T-cell (primary cell): ENCODE measurements at regions of chr14 and their contacts with region 1.

Region 1: DNA sequence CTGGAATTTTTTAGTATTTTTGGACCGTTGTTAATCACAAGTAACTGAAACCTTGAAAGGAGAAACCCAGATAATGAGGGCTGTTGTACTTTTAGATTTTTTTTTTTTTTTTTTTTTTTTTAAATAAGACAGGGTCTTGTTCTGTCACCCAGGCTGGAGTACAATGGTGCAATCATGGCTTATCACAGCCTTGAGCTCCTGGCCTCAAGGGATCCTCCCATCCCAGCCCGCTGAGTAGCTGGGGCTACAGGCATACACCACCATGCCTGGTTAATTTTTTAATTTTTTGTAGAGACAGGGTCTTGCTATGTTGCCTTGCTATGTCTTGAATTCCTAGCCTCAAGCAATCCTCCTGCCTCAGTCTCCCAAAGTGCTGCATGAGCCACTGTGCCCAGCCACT is 211.6 kb downstream of the SYNE2 start:
- DNase-seq: no peak
- ATAC-seq: no peak
- H3K4me3 ChIP-seq: no peak overlapping the region
- H3K4me3 Mint-ChIP-seq: no peak overlapping the region
- H3K27ac ChIP-seq: no peak overlapping the region
- H3K27ac Mint-ChIP-seq: no peak overlapping the region
- H3K4me1 ChIP-seq: no peaks in the 10 kb centered on the region
- H3K4me1 Mint-ChIP-seq: peaks cover 0 to 3% (median 2%) of the 10 kb centered on the region in 3 donors
- H3K27me3 ChIP-seq: no peaks in the 10 kb centered on the region
- H3K27me3 Mint-ChIP-seq: no peaks in the 10 kb centered on the region

Region 2: DNA sequence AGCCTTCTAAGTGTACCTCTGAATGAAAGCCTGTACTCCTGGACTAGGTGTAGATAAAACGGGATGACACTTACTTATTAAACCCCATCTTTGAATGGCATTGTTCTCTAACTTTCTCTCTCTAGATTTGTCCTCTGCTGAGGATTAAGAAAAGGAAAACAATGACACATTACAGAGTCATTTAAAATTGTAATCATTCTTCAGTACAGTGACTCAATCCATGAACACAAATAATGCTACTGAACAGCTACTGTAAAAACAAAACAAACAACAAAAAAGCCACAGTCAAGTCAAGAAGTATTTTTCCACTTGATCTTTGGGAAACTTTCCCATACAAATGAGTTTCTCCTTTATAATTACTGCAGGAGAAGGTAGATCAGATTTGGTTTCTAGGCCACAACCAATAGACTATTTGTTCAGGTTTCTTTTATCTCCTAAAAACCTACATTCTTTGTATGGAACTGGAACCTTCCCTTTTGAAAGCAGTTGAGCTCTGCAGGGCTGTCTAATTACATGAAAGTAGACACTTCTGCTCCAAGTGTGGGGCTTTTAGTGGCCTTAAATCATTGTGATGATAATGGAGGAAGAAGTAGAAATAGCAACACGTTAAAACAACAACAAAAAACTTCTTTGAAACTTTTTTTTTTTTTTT is 10.6 kb after region 1 on chr14:
- CTCF ChIA-PET with region 1: interaction called in 1 of 2 experiments, 11 read pairs
- POLR2A ChIA-PET with region 1: no interaction called
- DNase-seq: no peak
- ATAC-seq: no peak
- H3K4me3 ChIP-seq: no peak overlapping the region
- H3K4me3 Mint-ChIP-seq: no peak overlapping the region
- H3K27ac ChIP-seq: no peak overlapping the region
- H3K27ac Mint-ChIP-seq: no peak overlapping the region
- H3K4me1 ChIP-seq: no peaks in the 10 kb centered on the region
- H3K4me1 Mint-ChIP-seq: no peaks in the 10 kb centered on the region
- H3K27me3 ChIP-seq: no peaks in the 10 kb centered on the region
- H3K27me3 Mint-ChIP-seq: no peaks in the 10 kb centered on the region